ENCODE measurements at regions of chrX and their contacts with region 1.

Region 1: GRCh38 chrX:151151665-151152267 is 24.6 kb upstream of the GPR50 start:
- DNase-seq: no peak
- H3K4me3 Mint-ChIP-seq: no peak overlapping the region
- H3K27ac Mint-ChIP-seq: no peak overlapping the region
- H3K4me1 Mint-ChIP-seq: no peaks in the 10 kb centered on the region
- H3K27me3 Mint-ChIP-seq: peaks cover 13% of the 10 kb centered on the region

Region 2: GRCh38 chrX:151359931-151360871 is 208.4 kb after region 1 on chrX:
- intact Hi-C with region 1: loop called (anchors 2 kb)
- DNase-seq: no peak
- H3K4me3 Mint-ChIP-seq: peak overlapping the region; percentile 8
- H3K27ac Mint-ChIP-seq: no peak overlapping the region
- H3K4me1 Mint-ChIP-seq: no peaks in the 10 kb centered on the region
- H3K27me3 Mint-ChIP-seq: peaks cover 14% of the 10 kb centered on the region

Region 3: GRCh38 chrX:151488677-151489076 is 336.9 kb after region 1 on chrX:
- intact Hi-C with region 1: loop called (anchors 5 kb)
- DNase-seq: no peak
- H3K4me3 Mint-ChIP-seq: no peak overlapping the region
- H3K27ac Mint-ChIP-seq: no peak overlapping the region
- H3K4me1 Mint-ChIP-seq: no peaks in the 10 kb centered on the region
- H3K27me3 Mint-ChIP-seq: no peaks in the 10 kb centered on the region

Region 4: GRCh38 chrX:151680805-151681204 is 529.0 kb after region 1 on chrX:
- intact Hi-C with region 1: loop called (anchors 2 kb)
- DNase-seq: peak; percentile 16
- H3K4me3 Mint-ChIP-seq: no peak overlapping the region
- H3K27ac Mint-ChIP-seq: no peak overlapping the region
- H3K4me1 Mint-ChIP-seq: no peaks in the 10 kb centered on the region
- H3K27me3 Mint-ChIP-seq: peaks cover 9% of the 10 kb centered on the region